ENCODE measurements at regions of chr9 and their contacts with region 1.

Region 1: DNA sequence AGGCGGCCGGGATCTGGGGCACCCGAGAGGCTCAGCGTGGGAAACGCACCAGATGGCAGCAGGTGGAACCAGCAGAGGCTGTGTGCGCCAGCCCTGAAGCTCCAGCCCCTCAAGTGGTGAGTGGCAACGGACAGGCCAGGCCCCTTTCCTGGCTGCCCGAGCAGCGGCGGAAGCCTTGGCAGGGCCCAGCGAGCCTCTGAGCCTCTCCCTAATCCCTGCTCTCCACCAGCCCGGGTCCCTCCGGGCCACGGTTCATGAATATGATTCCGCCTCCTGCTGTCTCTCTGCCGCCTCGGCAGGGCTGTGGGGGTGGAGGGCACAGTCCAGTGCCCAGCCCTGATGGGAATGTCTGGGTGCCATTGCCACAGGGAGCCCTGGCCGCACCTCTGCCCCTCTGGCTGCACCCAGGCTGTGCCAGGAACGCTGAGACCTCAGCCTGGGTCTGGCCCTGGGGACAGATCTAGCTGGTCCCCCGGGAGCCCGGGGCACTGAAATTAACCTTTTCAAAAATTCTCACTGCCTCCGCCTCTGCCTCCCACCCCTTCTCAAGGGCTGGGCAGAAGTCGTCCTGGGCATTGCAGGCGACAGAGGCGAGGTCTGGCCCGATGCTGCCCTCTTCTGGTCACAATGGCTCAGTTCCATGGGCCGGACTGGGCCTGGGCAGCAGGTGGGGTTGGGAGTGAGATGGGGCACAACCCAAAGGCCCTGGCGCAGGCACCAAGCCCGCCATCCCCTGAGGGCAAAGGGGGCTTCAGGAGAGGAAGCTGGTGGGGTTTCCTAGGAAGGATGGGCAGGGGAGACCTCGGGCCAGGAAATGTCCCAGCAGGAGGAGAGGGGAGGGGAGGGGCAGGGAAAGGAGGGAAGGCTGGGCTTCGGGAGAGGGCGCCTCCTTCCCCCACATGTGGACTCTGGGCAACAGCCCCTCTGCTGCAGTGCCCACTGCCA is 20.3 kb downstream of the CCDC187 start:
- DNase-seq: peak; percentile 79
- ATAC-seq: peak; percentile 86
- H3K4me3 Mint-ChIP-seq: peak overlapping the region; percentile 79
- H3K27ac Mint-ChIP-seq: peak overlapping the region; percentile 65
- H3K4me1 Mint-ChIP-seq: peaks cover 21% of the 10 kb centered on the region
- H3K27me3 Mint-ChIP-seq: peaks cover 11% of the 10 kb centered on the region
- CTCF ChIP-seq: no peak

Region 2: GRCh38 chr9:136093995-136094881 is 189.3 kb before region 1 on chr9:
- CTCF ChIA-PET with region 1: no interaction called
- POLR2A ChIA-PET with region 1: interaction called, 3 read pairs
- intact Hi-C with region 1: loop called (anchors 2 kb)
- DNase-seq: no peak
- ATAC-seq: peak; percentile 65
- H3K4me3 Mint-ChIP-seq: peak overlapping the region; percentile 71
- H3K27ac Mint-ChIP-seq: no peak overlapping the region
- H3K4me1 Mint-ChIP-seq: peaks cover 3% of the 10 kb centered on the region
- H3K27me3 Mint-ChIP-seq: peaks cover 33% of the 10 kb centered on the region
- CTCF ChIP-seq: no peak

Region 3: GRCh38 chr9:136170006-136170901 is 113.3 kb before region 1 on chr9:
- CTCF ChIA-PET with region 1: interaction called, 50 read pairs
- POLR2A ChIA-PET with region 1: interaction called, 7 read pairs
- intact Hi-C with region 1: loop called (anchors 1 kb)
- DNase-seq: peak; percentile 70
- ATAC-seq: peak; percentile 99
- H3K4me3 Mint-ChIP-seq: no peak overlapping the region
- H3K27ac Mint-ChIP-seq: no peak overlapping the region
- H3K4me1 Mint-ChIP-seq: peaks cover 6% of the 10 kb centered on the region
- H3K27me3 Mint-ChIP-seq: peaks cover 16% of the 10 kb centered on the region
- CTCF ChIP-seq: peak; percentile 33

Region 4: DNA sequence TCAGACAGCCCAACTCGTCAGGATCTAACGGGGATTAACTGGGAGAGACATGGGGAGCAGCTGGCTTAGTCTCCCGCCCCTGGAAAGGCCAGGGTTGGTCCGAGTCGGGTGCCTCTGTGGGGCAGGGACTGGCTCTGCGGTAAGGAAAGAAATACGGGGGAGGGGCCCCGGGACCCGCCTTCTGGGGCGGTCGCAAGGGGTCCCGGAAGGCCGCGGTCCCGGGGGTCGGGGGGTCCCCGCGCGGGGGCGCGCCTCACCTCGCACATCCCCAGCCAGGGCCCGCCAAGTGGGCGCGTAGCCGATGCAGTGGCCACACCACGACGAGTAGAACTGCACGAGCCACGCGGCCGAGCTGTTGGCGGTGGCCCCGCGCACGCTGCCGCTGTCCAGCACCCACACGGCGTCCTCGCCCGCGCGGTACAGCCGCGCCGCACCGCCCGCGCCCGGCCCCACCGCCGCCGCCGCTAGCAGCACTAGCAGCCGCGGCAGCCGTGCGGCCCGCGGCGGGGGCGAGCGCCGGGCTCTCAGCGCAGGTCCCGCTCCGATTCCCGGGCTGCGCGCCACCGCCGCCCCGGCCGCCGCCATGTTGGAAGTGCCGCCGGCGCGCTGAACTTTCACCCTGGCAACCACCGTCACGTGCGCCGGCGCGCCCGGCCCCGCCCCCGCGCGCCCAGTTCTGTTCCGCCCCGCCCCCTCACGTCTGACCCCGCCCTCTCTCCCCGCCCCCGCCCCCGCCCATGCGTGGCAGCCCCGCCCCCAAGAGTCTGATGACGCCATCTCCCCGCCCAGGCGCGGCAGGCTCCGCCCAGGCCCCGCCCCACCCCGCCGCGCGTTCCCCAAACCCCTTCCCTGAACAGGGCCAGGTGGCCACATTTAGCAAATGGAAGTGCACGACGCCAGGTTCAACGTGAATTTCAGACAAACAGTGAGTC is 38.1 kb before region 1 on chr9 and contains the start of gene QSOX2:
- CTCF ChIA-PET with region 1: interaction called, 6 read pairs
- POLR2A ChIA-PET with region 1: interaction called, 3 read pairs
- intact Hi-C with region 1: loop called (anchors 1 kb)
- DNase-seq: peak; percentile 83
- ATAC-seq: peak; percentile 70
- H3K4me3 Mint-ChIP-seq: peak within 1 kb of the TSS; percentile 95
- H3K27ac Mint-ChIP-seq: peak within 1 kb of the TSS; percentile 92
- H3K4me1 Mint-ChIP-seq: peaks cover 52% of the 10 kb centered on the region
- H3K27me3 Mint-ChIP-seq: no peaks in the 10 kb centered on the region
- CTCF ChIP-seq: no peak
- total RNA-seq, gene QSOX2: 43.3 and 49.1 TPM in 2 replicates